Ascending aorta (tissue), 2 donors: ENCODE measurements at regions of chr5 and their contacts with region 1.

Region 1: GRCh38 chr5:179559284-179560252 is 9.2 kb downstream of the RUFY1 start:
- DNase-seq: peak; percentile 91 to 99
- H3K4me3 ChIP-seq: peak overlapping the region; percentile 61 to 68
- H3K27ac ChIP-seq: peak overlapping the region; percentile 75 to 81
- H3K4me1 ChIP-seq: peaks cover 3 to 6% of the 10 kb centered on the region in 2 donors
- H3K27me3 ChIP-seq: no peaks in the 10 kb centered on the region
- CTCF ChIP-seq: no peak

Region 2: GRCh38 chr5:178153573-178154343 is 1405.8 kb before region 1 on chr5 and contains the start of gene NHP2:
- intact Hi-C with region 1: loop called (anchors 5 kb)
- DNase-seq: peak; percentile 92 to 99
- H3K4me3 ChIP-seq: peak within 1 kb of the TSS; percentile 63 to 77
- H3K27ac ChIP-seq: peak within 1 kb of the TSS; percentile 72 to 74
- H3K4me1 ChIP-seq: peaks cover 7 to 14% of the 10 kb centered on the region in 2 donors
- H3K27me3 ChIP-seq: no peaks in the 10 kb centered on the region
- CTCF ChIP-seq: no peak
- total RNA-seq, gene NHP2: 55.1 TPM

Region 3: DNA sequence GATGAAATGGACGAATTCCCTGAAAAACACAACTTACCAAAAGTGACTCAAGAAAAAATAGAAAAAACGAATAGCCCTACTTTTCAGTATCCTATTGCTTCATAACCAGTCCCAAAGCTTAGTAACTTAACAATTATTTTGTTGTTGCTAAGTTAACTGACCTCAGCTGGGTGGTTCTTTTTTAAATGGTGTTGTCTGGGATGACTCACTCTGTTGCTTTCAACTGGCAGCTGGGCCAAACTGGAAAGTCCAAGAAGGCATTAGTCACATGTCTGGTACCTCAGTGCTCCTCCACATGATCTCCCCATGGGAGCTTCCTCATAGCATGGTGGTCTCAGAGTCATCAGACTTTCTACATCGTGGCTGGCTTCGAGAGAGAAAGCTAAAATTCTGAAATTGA is 166.5 kb before region 1 on chr5:
- intact Hi-C with region 1: no loop called
- DNase-seq: no peak
- H3K4me3 ChIP-seq: no peak overlapping the region
- H3K27ac ChIP-seq: no peak overlapping the region
- H3K4me1 ChIP-seq: no peaks in the 10 kb centered on the region
- H3K27me3 ChIP-seq: no peaks in the 10 kb centered on the region
- CTCF ChIP-seq: no peak

Region 4: GRCh38 chr5:179613460-179614071 is 54.0 kb after region 1 on chr5:
- intact Hi-C with region 1: loop called (anchors 5 kb)
- DNase-seq: no peak
- H3K4me3 ChIP-seq: peak overlapping the region in 1 of 2 donors; percentile 8
- H3K27ac ChIP-seq: no peak overlapping the region
- H3K4me1 ChIP-seq: peaks cover 3 to 20% of the 10 kb centered on the region in 2 donors
- H3K27me3 ChIP-seq: no peaks in the 10 kb centered on the region
- CTCF ChIP-seq: no peak

Region 5: DNA sequence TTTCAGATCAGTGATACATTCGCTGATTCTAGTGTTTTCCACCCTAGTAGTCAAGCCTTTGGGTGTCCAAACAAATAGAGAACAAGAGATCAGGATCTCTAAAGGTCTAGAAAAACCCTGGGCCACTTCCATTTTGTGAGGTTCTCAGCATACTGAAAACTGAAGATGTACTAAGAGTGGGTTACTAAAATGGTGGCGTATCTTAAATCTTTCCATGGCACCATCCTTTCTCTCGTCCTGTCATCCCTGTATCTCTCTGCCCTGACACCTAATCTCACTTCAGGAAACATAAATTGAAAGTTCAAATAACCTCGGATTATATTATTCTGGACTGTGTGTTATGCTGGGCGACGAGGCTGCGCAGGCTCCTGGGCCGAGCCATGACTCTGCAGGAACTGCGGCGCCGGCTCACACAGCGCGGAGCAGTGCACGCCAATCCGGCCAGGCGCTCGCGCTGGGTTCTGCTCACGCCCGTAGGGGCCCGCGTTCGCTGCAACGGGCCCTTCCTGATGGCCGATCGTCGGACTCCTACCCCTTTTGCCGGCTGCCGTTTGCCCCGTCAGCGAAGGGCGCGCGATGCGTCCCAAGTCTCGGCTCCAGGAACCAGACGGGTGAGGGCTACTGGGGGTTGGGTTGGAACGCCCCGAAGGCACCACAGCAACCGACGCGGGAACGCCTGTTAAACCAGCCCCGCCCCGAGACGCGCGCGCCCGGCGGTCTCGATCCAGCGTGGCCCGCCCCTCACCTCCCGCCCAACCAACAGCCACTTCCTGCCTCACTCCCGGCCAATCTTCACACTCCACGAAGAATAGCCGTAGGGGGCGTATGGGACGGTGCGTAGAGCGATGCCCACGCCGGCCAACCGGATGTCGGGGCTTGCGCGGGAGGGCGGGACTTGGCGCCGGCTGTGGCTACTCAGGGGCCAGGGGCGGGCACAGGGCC is 138.7 kb after region 1 on chr5:
- intact Hi-C with region 1: loop called (anchors 10 kb)
- DNase-seq: peak; percentile 98 to 100
- H3K4me3 ChIP-seq: peak overlapping the region; percentile 90 to 94
- H3K27ac ChIP-seq: peak overlapping the region; percentile 98 to 99
- H3K4me1 ChIP-seq: peaks cover 0 to 11% of the 10 kb centered on the region in 2 donors
- H3K27me3 ChIP-seq: no peaks in the 10 kb centered on the region
- CTCF ChIP-seq: no peak

Region 6: DNA sequence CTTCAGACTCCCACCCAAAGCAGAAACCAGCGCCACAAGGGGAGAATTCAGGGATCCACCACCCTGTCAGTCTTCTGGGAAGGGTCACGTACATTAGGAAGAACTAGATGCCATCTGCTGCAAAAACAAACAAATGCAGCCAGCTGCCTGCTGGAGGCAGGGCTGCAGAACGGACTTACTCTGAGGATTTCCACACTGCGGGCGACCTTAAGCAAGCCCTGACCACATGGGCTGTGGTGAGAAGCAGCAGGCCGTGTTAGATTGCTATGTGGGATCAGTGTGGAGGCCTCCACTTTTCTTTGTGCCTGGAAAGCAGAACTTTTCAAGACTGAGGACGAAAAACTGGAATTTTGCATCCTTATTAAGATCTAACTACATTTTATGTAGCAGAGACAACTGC is 220.8 kb after region 1 on chr5:
- intact Hi-C with region 1: no loop called
- DNase-seq: no peak
- H3K4me3 ChIP-seq: no peak overlapping the region
- H3K27ac ChIP-seq: no peak overlapping the region
- H3K4me1 ChIP-seq: no peaks in the 10 kb centered on the region
- H3K27me3 ChIP-seq: no peaks in the 10 kb centered on the region
- CTCF ChIP-seq: no peak

Region 7: DNA sequence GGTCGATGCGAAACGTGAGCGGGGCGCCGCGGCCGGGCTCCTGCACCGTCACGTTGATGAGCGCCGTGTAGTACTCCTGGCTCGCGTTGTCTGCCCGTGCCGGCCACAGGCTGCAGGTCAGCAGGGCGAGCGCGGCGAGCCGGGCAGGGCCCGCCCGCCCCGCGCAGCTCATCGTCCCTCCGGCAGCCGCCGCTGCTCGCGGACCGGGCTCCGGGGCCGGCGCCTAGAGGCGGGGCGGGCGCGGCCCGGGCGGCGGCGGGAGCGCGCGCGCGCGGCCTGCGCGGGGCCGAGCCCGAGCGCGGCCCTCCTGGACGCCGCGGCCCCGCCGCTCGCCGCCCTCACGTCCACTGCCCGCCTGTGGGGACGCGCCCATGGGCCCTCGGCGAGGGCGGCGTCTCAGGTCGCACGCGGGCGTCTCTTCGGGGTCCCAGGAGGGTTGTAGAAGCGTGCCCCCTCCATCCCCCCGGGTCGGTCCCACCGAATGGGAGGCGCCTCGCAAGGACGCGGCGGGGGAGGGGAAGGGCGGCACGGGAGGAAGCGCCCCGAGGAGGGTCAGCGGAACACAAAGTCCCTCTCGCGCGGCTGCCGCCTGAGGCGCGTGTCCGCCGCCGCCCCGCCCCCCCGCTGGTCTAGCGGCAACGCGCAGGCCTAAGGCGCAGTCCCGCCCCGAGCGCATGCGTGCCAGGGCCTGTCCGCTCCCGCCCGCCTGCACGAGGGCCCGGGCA is 512.1 kb after region 1 on chr5 and contains the start of gene RNF130:
- intact Hi-C with region 1: loop called (anchors 10 kb)
- DNase-seq: peak; percentile 72 to 95
- H3K4me3 ChIP-seq: peak within 1 kb of the TSS; percentile 74 to 94
- H3K27ac ChIP-seq: peak within 1 kb of the TSS; percentile 94 to 98
- H3K4me1 ChIP-seq: peaks cover 0 to 10% of the 10 kb centered on the region in 2 donors
- H3K27me3 ChIP-seq: no peaks in the 10 kb centered on the region
- CTCF ChIP-seq: no peak
- total RNA-seq, gene RNF130: 86.7 TPM